HCT116 (cell line): ENCODE measurements at regions of chr17 and their contacts with region 1.

Region 1: GRCh38 chr17:47970704-47971463 is at the start of gene CDK5RAP3:
- DNase-seq: peak; percentile 100
- ATAC-seq: peak; percentile 93
- H3K4me3 ChIP-seq: peak within 1 kb of the TSS; percentile 69 to 82
- H3K27ac ChIP-seq: peak within 1 kb of the TSS; percentile 66
- H3K4me1 ChIP-seq: peaks cover 19 to 51% of the 10 kb centered on the region in 2 experiments
- H3K27me3 ChIP-seq: no peaks in the 10 kb centered on the region
- CTCF ChIP-seq: peak; percentile 96 to 98 (median 98)
- POLR2A ChIP-seq: peak; percentile 46
- RAD21 ChIP-seq: peak; percentile 94
- total RNA-seq, gene CDK5RAP3: 255 TPM

Region 2: GRCh38 chr17:47388825-47389224 is 582.1 kb before region 1 on chr17:
- CTCF ChIA-PET with region 1: no interaction called
- POLR2A ChIA-PET with region 1: no interaction called
- RAD21 ChIA-PET with region 1: no interaction called
- intact Hi-C with region 1: no loop called
- DNase-seq: no peak
- ATAC-seq: no peak
- H3K4me3 ChIP-seq: no peak overlapping the region
- H3K27ac ChIP-seq: no peak overlapping the region
- H3K4me1 ChIP-seq: no peaks in the 10 kb centered on the region
- H3K27me3 ChIP-seq: no peaks in the 10 kb centered on the region
- CTCF ChIP-seq: no peak
- POLR2A ChIP-seq: no peak
- RAD21 ChIP-seq: no peak

Region 3: GRCh38 chr17:47831003-47831933 is 139.6 kb before region 1 on chr17 and contains the starts of genes LRRC46 and MRPL10:
- CTCF ChIA-PET with region 1: interaction called, 5 read pairs
- POLR2A ChIA-PET with region 1: no interaction called
- RAD21 ChIA-PET with region 1: no interaction called
- intact Hi-C with region 1: loop called (anchors 2 kb)
- DNase-seq: peak; percentile 86
- ATAC-seq: peak; percentile 89
- H3K4me3 ChIP-seq: peak within 1 kb of the TSS; percentile 90 to 99
- H3K27ac ChIP-seq: peak within 1 kb of the TSS; percentile 64
- H3K4me1 ChIP-seq: peaks cover 14 to 20% of the 10 kb centered on the region in 2 experiments; a peak in 3 of 4 replicates
- H3K27me3 ChIP-seq: no peaks in the 10 kb centered on the region
- CTCF ChIP-seq: peak in 2 of 3 experiments; percentile 59 to 70; a peak in 5 of 6 replicates
- POLR2A ChIP-seq: peak; percentile 96
- RAD21 ChIP-seq: no peak; the same call in 1 of the 2 replicates
- total RNA-seq, gene LRRC46: 0.76 TPM
- total RNA-seq, gene MRPL10: 112 TPM

Region 4: DNA sequence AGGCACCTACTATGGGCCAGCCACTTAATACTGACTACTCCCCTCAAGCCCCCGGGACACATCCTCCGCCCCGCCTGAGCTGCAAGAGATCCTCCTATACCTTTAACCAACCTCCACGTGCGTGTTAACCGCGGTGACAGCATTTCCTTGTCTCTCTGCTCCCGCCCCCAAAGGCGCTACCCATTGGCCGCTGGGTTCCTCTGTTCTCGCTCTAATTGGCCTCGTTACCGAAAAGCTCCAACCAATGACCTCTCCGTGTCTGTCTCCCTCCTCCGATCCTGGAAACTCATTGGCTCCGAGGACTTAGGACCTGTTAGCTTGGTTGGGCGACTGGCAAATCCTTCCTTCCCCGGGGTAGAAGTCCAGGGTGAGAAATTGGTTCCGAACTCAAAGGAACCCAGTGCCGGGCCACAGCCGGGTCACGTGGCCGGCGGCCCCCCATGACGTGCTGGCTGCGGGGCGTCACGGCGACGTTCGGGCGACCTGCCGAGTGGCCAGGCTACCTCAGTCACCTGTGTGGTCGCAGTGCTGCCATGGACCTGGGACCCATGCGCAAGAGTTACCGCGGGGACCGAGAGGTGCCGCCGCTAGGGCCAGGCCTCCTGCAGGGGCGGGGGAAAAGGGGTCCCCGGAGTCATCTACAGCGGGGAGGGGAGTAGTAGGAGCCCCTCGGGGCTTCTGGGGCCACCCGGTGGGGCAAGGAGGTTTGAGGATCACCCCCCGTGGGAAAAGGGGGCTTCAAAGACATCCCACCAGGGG is 29.5 kb before region 1 on chr17 and contains the start of gene PNPO:
- CTCF ChIA-PET with region 1: interaction called, 42 read pairs
- POLR2A ChIA-PET with region 1: interaction called, 20 read pairs
- RAD21 ChIA-PET with region 1: no interaction called
- intact Hi-C with region 1: no loop called
- DNase-seq: peak; percentile 100
- ATAC-seq: peak; percentile 97
- H3K4me3 ChIP-seq: peak within 1 kb of the TSS; percentile 88 to 92
- H3K27ac ChIP-seq: peak within 1 kb of the TSS; percentile 81
- H3K4me1 ChIP-seq: peaks cover 24 to 53% of the 10 kb centered on the region in 2 experiments
- H3K27me3 ChIP-seq: no peaks in the 10 kb centered on the region
- CTCF ChIP-seq: peak in 1 of 3 experiments; percentile 24; a peak in 2 of 6 replicates
- POLR2A ChIP-seq: no peak
- RAD21 ChIP-seq: no peak
- total RNA-seq, gene PNPO: 74.9 TPM

Region 5: DNA sequence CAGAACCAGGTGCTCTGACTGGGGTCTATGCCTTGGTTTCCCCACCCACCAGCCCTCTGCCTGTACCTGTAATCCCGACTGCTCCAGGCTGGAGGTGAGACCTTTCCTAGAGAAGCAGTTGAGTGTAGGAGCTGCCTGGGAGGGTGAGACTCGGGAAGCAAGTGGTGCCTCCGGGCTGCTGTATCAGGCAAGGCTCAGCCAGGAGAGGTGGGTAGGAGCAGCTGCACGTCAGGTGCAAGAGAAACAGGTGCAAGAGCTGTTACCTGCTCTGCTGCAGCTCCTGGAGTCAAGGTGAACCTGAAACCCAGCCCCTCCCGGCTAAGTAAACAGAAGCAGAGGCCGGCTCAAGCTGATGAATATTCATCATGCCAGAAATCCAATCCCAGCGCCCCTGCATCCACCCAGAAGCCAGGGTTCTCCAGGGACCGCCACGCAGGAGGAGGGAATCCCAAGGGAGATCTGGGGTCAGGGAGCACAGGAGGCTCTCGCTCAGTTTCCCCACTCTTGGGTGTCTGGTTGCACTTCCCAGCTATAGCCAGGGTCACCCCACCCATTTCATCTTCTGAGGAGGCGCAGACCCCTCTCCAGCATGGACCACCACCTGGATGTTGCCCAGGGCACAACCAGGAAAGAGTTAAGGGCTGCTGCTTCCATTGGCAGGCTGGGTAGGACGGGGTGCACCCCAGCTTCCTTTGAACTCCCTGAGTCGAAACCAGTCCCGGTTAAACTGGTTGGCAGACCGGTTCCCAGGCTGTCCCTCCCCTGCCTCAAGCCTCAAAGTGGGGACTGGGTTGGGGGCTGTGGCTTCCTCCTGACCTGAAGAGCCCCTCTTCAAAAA is 13.1 kb before region 1 on chr17 and contains the start of gene PRR15L:
- CTCF ChIA-PET with region 1: interaction called, 32 read pairs
- POLR2A ChIA-PET with region 1: interaction called, 15 read pairs
- RAD21 ChIA-PET with region 1: no interaction called
- intact Hi-C with region 1: no loop called
- DNase-seq: no peak
- ATAC-seq: peak; percentile 44
- H3K4me3 ChIP-seq: peak within 1 kb of the TSS in 1 of 2 experiments; percentile 23; a peak in 1 of 4 replicates
- H3K27ac ChIP-seq: peak within 1 kb of the TSS; percentile 34; the same call in 1 of the 2 replicates
- H3K4me1 ChIP-seq: peaks cover 41 to 60% of the 10 kb centered on the region in 2 experiments
- H3K27me3 ChIP-seq: no peaks in the 10 kb centered on the region
- CTCF ChIP-seq: no peak
- POLR2A ChIP-seq: no peak
- RAD21 ChIP-seq: no peak
- total RNA-seq, gene PRR15L: 0.34 TPM

Region 6: DNA sequence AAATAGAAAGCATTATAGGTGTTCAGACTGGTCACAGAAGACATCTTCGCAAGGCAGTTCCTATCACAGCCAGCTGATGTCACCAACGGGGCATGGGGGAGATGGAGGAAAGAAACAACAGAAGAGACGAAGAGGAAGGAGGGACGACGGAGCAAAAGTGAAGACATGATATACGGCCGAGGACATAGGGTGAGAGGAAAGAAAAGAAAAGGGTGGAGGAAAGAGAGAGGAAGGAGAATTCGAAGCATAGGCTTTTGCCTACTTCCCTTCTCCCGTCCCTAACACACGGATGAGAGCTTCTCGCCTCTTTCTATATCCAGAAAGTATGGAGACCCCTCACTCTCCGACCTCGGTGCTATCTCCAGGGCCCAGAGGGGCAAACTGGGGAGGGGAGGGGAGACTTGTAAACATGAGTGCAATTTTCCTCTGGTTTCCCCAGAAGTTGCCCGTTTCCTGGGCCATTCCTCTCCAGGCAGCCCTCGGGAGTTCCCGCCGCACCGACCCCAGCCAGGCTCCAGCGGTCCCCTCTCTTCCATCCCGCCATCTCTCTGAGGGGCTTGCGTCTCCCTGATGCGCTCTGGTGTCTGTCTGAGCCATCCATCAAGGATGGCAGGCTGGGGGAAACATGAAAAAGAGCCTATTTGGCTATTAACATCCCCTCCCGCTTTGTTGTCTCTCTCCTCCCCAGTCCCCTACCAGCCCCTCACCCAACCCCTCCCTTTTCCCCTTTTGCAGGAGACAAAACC is 40.7 kb after region 1 on chr17:
- CTCF ChIA-PET with region 1: interaction called, 36 read pairs
- POLR2A ChIA-PET with region 1: interaction called, 3 read pairs
- RAD21 ChIA-PET with region 1: no interaction called
- intact Hi-C with region 1: no loop called
- DNase-seq: peak; percentile 35
- ATAC-seq: peak; percentile 89
- H3K4me3 ChIP-seq: peak overlapping the region in 1 of 2 experiments; percentile 44; a peak in 2 of 4 replicates
- H3K27ac ChIP-seq: no peak overlapping the region
- H3K4me1 ChIP-seq: peaks cover 5 to 17% of the 10 kb centered on the region in 2 experiments; a peak in 3 of 4 replicates
- H3K27me3 ChIP-seq: no peaks in the 10 kb centered on the region
- CTCF ChIP-seq: peak; percentile 53 to 89 (median 86); a peak in 5 of 6 replicates
- POLR2A ChIP-seq: no peak
- RAD21 ChIP-seq: peak; percentile 69

Region 7: DNA sequence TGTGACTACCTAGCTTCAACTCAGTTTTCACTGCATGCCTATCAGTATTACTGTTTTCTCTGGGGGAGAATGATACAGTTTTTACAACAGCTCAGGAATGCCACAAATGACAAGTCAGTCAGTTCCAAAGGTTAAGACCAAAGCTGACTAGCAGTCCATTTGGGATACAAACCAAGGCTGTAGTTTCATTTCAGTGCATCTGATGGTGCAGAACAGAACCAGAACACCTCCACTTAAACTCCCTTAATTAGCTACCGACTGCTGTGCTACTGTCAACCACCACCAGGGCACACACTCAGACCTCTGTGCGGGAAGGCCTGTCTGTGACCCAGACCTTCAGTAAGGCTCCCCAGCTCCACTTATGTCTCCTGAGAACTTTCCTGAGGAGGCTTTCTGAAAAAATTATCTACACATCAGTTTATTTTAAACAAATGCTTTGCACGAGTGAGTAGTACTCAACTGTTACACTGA is 97.6 kb after region 1 on chr17:
- CTCF ChIA-PET with region 1: no interaction called
- POLR2A ChIA-PET with region 1: no interaction called
- RAD21 ChIA-PET with region 1: no interaction called
- intact Hi-C with region 1: no loop called
- DNase-seq: no peak
- ATAC-seq: peak; percentile 88
- H3K4me3 ChIP-seq: no peak overlapping the region
- H3K27ac ChIP-seq: no peak overlapping the region
- H3K4me1 ChIP-seq: no peaks in the 10 kb centered on the region
- H3K27me3 ChIP-seq: no peaks in the 10 kb centered on the region
- CTCF ChIP-seq: peak in 2 of 3 experiments; percentile 64 to 66; a peak in 4 of 6 replicates
- POLR2A ChIP-seq: no peak
- RAD21 ChIP-seq: peak; percentile 27; the same call in 1 of the 2 replicates